Heart left ventricle (tissue), 16 donors: ENCODE measurements at regions of chr1 and their contacts with region 1.

Region 1: DNA sequence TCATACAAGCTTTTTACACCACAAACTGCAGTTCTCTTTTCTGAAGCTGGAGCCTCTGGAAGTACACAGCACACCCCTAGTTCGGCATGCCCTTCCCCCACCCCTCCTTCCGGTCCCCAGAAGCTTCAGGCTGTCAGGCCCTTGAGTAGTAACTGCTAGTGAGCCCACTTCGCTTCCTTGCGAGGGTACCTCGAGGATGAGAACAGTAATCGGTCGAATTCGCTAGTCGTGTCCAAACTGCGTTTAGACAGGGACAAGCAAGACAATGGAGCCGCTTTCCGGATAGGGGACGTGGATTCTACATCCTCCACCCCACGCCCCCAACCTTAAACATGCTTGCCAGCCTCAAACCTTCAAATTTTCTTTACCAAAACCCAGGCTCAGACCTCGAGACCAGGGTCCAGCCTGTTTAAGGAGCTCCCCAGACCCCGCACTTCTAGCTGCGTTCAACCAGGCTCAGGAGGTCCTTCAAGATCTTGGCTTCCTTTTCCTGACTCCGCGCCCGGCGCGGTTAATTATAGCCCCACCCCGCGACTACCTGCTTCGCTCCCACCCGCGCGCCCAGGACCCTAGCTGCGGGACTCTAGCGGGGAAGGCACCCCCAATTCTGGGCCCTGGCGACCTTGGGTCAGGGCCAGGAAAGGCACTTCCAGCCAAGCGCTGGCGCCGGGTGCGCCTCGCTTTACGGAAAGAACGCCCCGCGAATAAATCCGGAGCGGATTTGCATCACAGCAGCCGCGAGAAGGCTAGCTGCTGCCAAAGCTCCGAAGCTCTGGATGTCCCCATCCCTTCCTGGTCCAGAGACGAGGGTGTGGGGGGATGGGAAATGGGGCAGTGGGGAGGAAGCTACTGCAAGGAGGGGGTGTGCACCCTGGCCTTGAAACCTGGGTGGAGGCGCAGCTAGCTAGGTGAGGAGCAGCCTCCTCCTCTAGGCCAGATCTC is 8.1 kb upstream of the TSPAN1 start:
- DNase-seq: peak; percentile 78 to 86 (median 84)
- ATAC-seq: peak; percentile 71 to 86 (median 76)
- H3K4me3 ChIP-seq: peak overlapping the region in 11 of 12 donors; percentile 10 to 63 (median 53)
- H3K27ac ChIP-seq: peak overlapping the region; percentile 74 to 98 (median 88)
- H3K4me1 ChIP-seq: peaks cover 0 to 56% (median 35%) of the 10 kb centered on the region in 12 donors
- H3K27me3 ChIP-seq: peaks cover 0 to 5% (median 0%) of the 10 kb centered on the region in 9 donors
- CTCF ChIP-seq: no peak
- POLR2A ChIP-seq: peak in 1 of 2 donors; percentile 24

Region 2: GRCh38 chr1:46084553-46085451 is 82.0 kb before region 1 on chr1:
- intact Hi-C with region 1: loop called in 1 of 10 experiments (anchors 5 kb)
- DNase-seq: no peak
- ATAC-seq: peak in 3 of 4 donors; percentile 60 to 70 (median 65)
- H3K4me3 ChIP-seq: no peak overlapping the region
- H3K27ac ChIP-seq: peak overlapping the region in 2 of 12 donors; percentile 2 to 30
- H3K4me1 ChIP-seq: peaks cover 0 to 35% (median 15%) of the 10 kb centered on the region in 12 donors
- H3K27me3 ChIP-seq: no peaks in the 10 kb centered on the region
- CTCF ChIP-seq: no peak
- POLR2A ChIP-seq: no peak

Region 3: DNA sequence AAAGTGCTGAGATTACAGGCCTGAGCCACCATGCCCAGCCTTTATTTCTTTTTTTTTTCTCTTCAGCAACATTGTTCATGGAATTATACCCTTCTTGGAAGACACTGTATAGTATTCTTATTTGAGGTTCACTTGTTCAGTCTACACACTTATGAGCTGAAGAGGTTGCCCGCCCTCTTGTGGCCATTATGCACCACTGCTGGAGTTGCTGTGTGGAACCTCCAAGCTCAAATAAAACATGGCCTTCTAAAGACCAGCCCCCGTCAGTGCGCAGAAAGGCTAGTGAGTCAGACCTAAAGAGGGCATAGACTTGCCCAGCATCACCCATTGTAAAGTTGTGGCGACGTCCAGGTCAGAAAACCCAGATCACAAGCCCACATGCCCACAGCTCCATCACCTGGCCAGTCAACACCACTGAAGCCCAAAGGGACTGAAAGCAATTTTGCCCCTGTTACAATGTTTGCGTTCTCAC is 56.7 kb after region 1 on chr1:
- intact Hi-C with region 1: no loop called
- DNase-seq: peak; percentile 55 to 79 (median 62)
- ATAC-seq: peak; percentile 72 to 91 (median 84)
- H3K4me3 ChIP-seq: no peak overlapping the region
- H3K27ac ChIP-seq: no peak overlapping the region
- H3K4me1 ChIP-seq: peaks cover 0 to 25% (median 0%) of the 10 kb centered on the region in 12 donors
- H3K27me3 ChIP-seq: no peaks in the 10 kb centered on the region
- CTCF ChIP-seq: peak; percentile 79 to 95 (median 90)
- POLR2A ChIP-seq: no peak

Region 4: GRCh38 chr1:46247436-46248121 is 80.8 kb after region 1 on chr1 and contains the start of gene RAD54L:
- intact Hi-C with region 1: no loop called
- DNase-seq: peak; percentile 98 to 99 (median 98)
- ATAC-seq: peak; percentile 95 to 97 (median 96)
- H3K4me3 ChIP-seq: peak within 1 kb of the TSS; percentile 41 to 81 (median 69)
- H3K27ac ChIP-seq: peak within 1 kb of the TSS; percentile 53 to 95 (median 82)
- H3K4me1 ChIP-seq: peaks cover 0 to 18% (median 7%) of the 10 kb centered on the region in 12 donors
- H3K27me3 ChIP-seq: no peaks in the 10 kb centered on the region
- CTCF ChIP-seq: no peak
- POLR2A ChIP-seq: no peak
- total RNA-seq, gene RAD54L: 0.44 to 4.0 (median 0.87) TPM in 8 of 9 donors, not detected in the other